ENCODE measurements at regions of chr3 and their contacts with region 1.

Region 1: DNA sequence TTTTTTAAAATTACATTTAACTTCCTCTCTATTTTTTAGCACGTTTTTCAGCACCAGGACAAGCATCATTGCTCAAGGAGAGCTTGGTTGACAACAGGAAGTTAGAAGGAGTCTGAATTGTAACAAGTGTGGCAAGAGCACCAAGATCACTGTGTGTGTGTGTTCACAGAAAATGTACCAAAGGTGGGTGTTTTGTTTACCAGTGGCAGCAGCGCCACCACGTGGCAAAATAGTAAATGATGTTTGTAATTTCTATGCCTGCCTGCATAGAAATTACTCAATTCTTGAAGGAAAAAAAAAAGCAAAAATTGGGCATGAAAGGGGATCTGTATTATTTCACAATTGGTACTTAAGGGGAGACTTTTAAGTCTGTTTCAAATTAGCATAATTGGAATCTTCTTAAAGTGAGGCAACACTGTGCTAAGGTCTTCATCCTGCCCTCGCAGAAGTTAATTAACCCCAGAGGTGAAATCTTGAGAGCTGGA is 7.4 kb upstream of the U2SURP start:
- DNase-seq: peak; percentile 62
- H3K4me3 ChIP-seq: no peak overlapping the region
- CTCF ChIP-seq: peak; percentile 69

Region 2: DNA sequence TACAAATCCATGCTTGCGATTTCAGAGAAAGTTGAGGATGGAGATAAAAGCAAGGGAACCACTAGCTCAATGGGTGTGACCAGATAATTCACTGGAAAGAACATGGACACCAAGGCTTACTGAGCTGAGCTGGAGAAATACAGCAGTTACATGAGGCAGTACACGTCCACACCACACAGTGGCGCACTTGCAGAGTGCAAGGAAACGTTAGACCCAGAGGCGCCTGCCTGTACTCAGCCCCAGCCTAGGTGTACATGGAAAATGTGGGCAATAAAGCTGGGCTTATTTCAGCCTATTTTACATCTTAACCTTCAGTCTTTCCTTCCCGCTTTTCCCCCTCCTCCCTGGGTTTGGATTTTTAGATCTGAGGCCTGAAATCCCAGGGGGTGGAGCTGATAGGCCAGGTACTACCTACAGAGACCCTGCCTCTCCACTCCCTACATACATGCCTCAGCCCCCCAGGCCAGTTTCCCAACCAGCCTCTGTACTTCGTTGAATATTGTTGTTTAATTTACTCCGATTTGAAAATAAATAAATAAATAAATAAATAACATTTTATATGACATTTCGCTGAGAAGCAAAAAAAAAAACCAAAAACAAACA is 165.2 kb before region 1 on chr3:
- in situ Hi-C with region 1: loop called (anchors 25 kb)
- DNase-seq: peak; percentile 68
- H3K4me3 ChIP-seq: no peak overlapping the region
- CTCF ChIP-seq: peak; percentile 89

Measured in astrocyte of the cerebellum (primary cell).